Posterior cingulate gyrus (tissue), 11 donors: ENCODE measurements at regions of chr4 and their contacts with region 1.

Region 1: GRCh38 chr4:25113915-25114904 is 46.0 kb downstream of the SEPSECS start:
- DNase-seq: peak in 1 of 10 donors; percentile 70

Region 2: GRCh38 chr4:25069014-25069413 is 45.2 kb before region 1 on chr4:
- intact Hi-C with region 1: loop called (anchors 1 kb)
- DNase-seq: no peak

Region 3: GRCh38 chr4:25081866-25082471 is 32.2 kb before region 1 on chr4:
- intact Hi-C with region 1: no loop called
- DNase-seq: no peak